Activated CD8-positive, alpha-beta T cell treated with anti-CD3 and anti-CD28 coated beads for 36 hours (primary cell): ENCODE measurements at regions of chr9 and their contacts with region 1.

Region 1: GRCh38 chr9:136790927-136791641 is at the start of gene TMEM141:
- DNase-seq: peak; percentile 100
- ATAC-seq: peak; percentile 91
- H3K4me3 Mint-ChIP-seq: peak within 1 kb of the TSS; percentile 82
- H3K27ac Mint-ChIP-seq: peak within 1 kb of the TSS; percentile 86
- H3K4me1 Mint-ChIP-seq: peaks cover 31% of the 10 kb centered on the region
- H3K27me3 Mint-ChIP-seq: peaks cover 10% of the 10 kb centered on the region
- CTCF ChIP-seq: no peak
- total RNA-seq, gene TMEM141: 50.6 to 51.1 TPM

Region 2: GRCh38 chr9:136777359-136777758 is 13.7 kb before region 1 on chr9:
- CTCF ChIA-PET with region 1: interaction called, 15 read pairs
- POLR2A ChIA-PET with region 1: no interaction called
- intact Hi-C with region 1: no loop called
- DNase-seq: no peak
- ATAC-seq: no peak
- H3K4me3 Mint-ChIP-seq: no peak overlapping the region
- H3K27ac Mint-ChIP-seq: no peak overlapping the region
- H3K4me1 Mint-ChIP-seq: peaks cover 3% of the 10 kb centered on the region
- H3K27me3 Mint-ChIP-seq: peaks cover 12% of the 10 kb centered on the region
- CTCF ChIP-seq: no peak

Region 3: GRCh38 chr9:136807281-136808074 is 16.4 kb after region 1 on chr9 and contains the start of gene RABL6:
- CTCF ChIA-PET with region 1: interaction called, 9 read pairs
- POLR2A ChIA-PET with region 1: interaction called, 10 read pairs
- intact Hi-C with region 1: no loop called
- DNase-seq: peak; percentile 82
- ATAC-seq: peak; percentile 89
- H3K4me3 Mint-ChIP-seq: peak within 1 kb of the TSS; percentile 89
- H3K27ac Mint-ChIP-seq: peak within 1 kb of the TSS; percentile 95
- H3K4me1 Mint-ChIP-seq: peaks cover 27% of the 10 kb centered on the region
- H3K27me3 Mint-ChIP-seq: no peaks in the 10 kb centered on the region
- CTCF ChIP-seq: no peak
- total RNA-seq, gene RABL6: 85.6 to 86.6 TPM

Region 4: DNA sequence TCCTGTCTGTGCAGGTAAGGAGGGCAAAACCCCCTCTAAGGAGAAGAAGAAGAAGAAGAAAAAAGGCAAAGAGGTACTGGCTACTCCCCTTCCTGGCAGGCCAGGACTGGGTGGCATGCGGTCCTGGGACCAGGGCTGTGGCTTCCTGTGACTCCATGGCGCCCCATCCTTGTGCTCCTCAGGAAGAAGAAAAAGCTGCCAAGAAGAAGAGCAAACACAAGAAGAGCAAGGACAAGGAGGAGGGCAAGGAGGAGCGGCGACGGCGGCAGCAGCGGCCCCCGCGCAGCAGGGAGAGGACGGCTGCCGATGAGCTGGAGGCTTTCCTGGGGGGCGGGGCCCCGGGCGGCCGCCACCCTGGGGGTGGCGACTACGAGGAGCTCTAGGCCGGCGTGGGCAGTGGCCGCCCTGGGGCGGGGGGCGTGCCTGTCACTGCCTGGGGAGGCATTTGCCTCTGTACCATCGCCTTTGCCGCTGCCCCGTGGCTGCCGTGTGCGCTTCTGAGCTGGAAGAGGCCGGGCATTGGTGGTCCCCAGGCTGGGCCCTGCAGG is 49.1 kb after region 1 on chr9:
- CTCF ChIA-PET with region 1: interaction called, 12 read pairs
- POLR2A ChIA-PET with region 1: interaction called, 3 read pairs
- intact Hi-C with region 1: loop called (anchors 5 kb)
- DNase-seq: no peak
- ATAC-seq: no peak
- H3K4me3 Mint-ChIP-seq: no peak overlapping the region
- H3K27ac Mint-ChIP-seq: no peak overlapping the region
- H3K4me1 Mint-ChIP-seq: peaks cover 12% of the 10 kb centered on the region
- H3K27me3 Mint-ChIP-seq: peaks cover 2% of the 10 kb centered on the region
- CTCF ChIP-seq: no peak

Region 5: GRCh38 chr9:136949817-136950655 is 159.0 kb after region 1 on chr9:
- CTCF ChIA-PET with region 1: interaction called, 10 read pairs
- POLR2A ChIA-PET with region 1: no interaction called
- intact Hi-C with region 1: no loop called
- DNase-seq: peak; percentile 99
- ATAC-seq: peak; percentile 97
- H3K4me3 Mint-ChIP-seq: peak overlapping the region; percentile 82
- H3K27ac Mint-ChIP-seq: peak overlapping the region; percentile 83
- H3K4me1 Mint-ChIP-seq: peaks cover 6% of the 10 kb centered on the region
- H3K27me3 Mint-ChIP-seq: no peaks in the 10 kb centered on the region
- CTCF ChIP-seq: peak; percentile 37